HAP-1 (cell line): ENCODE measurements at regions of chr7 and their contacts with region 1.

Region 1: DNA sequence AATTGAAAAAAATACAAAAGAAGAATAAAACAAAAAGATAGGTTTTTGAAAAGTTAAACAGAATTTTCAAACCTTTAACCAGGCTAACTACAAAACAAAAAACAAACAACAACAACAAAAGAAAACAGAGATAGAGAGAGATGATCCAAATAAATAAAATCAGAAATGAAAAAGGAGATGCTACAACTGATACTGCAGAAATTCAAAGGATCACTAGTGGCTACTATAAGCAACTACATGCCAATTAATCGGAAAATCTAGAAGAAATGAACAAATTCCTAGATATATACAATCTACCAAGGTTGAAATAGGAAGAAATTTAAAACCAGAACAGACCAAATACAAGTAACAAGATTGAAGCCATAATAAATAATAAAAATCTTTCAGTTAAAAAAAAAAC is 326.8 kb upstream of the VSTM2A start:
- DNase-seq: no peak
- H3K4me3 ChIP-seq: no peak overlapping the region
- H3K4me1 ChIP-seq: no peaks in the 10 kb centered on the region
- H3K27me3 ChIP-seq: no peaks in the 10 kb centered on the region

Region 2: GRCh38 chr7:54292171-54292925 is 76.9 kb after region 1 on chr7:
- in situ Hi-C with region 1: loop called (anchors 10 kb)
- DNase-seq: no peak
- H3K4me3 ChIP-seq: no peak overlapping the region
- H3K4me1 ChIP-seq: no peaks in the 10 kb centered on the region
- H3K27me3 ChIP-seq: no peaks in the 10 kb centered on the region